ENCODE measurements at regions of chr13 and their contacts with region 1.

Region 1: GRCh38 chr13:29595380-29596063 is at the start of gene SLC7A1:
- DNase-seq: peak; percentile 88
- H3K4me3 Mint-ChIP-seq: peak within 1 kb of the TSS; percentile 95
- H3K27ac Mint-ChIP-seq: peak within 1 kb of the TSS; percentile 95
- H3K4me1 Mint-ChIP-seq: peaks cover 51% of the 10 kb centered on the region
- H3K27me3 Mint-ChIP-seq: peaks cover 6% of the 10 kb centered on the region
- total RNA-seq, gene SLC7A1: 128 and 138 TPM in 2 replicates

Region 2: DNA sequence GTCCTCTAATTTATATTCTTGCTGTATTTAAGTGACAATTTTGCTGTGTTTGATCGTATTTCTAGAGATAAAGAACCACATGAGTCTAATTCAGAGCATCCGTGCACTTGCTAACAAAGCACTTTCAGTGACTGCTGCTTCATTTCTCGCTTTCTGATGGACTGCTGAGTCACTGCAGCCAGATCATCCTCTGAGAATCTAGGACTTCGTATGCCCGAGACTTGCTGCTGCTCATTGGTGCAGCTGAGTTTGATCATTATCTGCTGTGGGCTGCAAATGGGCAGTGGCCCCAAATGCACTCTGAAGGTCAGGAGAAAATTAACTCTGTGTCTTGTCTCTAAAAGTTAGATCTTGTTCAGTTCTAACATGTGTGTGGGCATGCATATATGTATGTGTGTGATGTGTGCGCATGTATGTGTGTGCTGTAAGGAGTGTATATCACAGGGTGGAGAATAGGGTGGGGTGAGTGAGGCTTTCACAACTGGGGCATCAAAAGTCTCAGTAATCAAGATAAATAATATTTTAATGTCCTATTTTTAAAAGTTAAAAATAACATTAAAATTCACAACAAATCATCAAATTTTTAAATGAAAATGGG is 432.8 kb before region 1 on chr13:
- intact Hi-C with region 1: no loop called
- DNase-seq: no peak
- H3K4me3 Mint-ChIP-seq: no peak overlapping the region
- H3K27ac Mint-ChIP-seq: no peak overlapping the region
- H3K4me1 Mint-ChIP-seq: no peaks in the 10 kb centered on the region
- H3K27me3 Mint-ChIP-seq: no peaks in the 10 kb centered on the region

Region 3: DNA sequence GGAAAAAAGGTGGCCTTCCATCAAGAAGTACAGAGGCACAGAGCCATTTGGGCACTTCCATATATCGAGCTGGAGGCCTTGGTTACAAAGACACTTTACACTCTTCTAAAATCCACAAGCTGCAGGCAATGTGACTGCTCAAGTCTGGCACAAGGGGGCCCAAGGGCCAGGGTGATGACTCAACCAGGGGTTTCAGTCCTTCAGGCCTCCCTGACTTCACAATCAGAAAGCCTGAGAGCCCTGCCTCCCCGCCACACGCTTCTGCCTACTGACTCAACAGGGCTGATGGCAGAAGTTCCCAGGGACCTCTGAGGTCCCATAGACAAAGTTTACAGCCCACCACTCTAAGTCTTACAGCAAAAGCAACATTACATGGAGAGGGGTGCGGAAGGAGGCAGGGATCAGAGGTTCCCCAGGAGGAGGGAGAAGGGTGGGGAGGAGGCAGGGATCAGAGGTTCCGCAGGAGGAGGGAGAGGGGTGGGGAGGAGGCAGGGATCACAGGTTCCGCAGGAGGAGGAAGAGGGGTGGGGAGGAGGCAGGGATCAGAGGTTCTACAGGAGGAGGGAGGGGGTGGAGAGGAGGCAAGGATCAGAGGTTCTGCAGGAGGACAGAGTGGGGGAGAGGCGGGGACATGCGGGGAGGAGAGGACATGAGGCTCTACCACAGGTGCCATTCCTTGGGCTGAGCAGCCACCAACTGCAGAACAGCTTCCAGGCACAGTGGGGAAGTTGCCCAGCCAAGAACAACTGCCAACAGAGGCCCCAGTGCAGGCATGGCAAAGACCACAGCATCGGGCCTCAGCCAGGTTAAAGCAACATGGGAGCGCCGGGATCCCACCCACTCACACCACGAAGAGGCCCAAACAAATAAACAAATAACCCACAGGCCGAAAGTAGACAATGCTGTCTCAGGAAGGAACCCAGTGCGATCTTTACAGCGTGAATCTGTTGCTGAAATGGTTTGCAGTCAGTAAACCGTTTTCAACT is 52.0 kb before region 1 on chr13:
- intact Hi-C with region 1: loop called (anchors 5 kb)
- DNase-seq: peak; percentile 3
- H3K4me3 Mint-ChIP-seq: no peak overlapping the region
- H3K27ac Mint-ChIP-seq: peak overlapping the region; percentile 77
- H3K4me1 Mint-ChIP-seq: peaks cover 34% of the 10 kb centered on the region
- H3K27me3 Mint-ChIP-seq: peaks cover 2% of the 10 kb centered on the region

Region 4: DNA sequence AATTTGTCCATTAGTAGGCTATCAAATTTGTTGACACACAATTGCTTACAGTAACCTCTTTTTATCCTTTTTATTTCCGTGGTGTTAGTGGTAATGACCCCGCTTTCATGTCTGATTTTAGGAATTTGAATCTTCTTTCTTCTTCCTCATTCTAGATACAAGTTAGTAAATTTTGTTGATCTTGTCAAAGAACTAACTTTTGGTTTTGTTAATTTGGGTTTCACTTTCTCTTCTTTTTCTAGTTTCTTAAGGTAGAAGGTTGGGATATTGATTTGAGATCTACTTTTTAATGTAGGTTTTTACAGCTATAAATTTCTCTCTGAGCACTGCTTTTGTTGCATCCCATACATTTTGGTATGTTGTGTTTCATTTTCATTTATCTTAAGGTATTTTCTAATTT is 53.2 kb after region 1 on chr13:
- intact Hi-C with region 1: loop called (anchors 5 kb)
- DNase-seq: no peak
- H3K4me3 Mint-ChIP-seq: peak overlapping the region; percentile 70
- H3K27ac Mint-ChIP-seq: no peak overlapping the region
- H3K4me1 Mint-ChIP-seq: peaks cover 18% of the 10 kb centered on the region
- H3K27me3 Mint-ChIP-seq: no peaks in the 10 kb centered on the region

Region 5: DNA sequence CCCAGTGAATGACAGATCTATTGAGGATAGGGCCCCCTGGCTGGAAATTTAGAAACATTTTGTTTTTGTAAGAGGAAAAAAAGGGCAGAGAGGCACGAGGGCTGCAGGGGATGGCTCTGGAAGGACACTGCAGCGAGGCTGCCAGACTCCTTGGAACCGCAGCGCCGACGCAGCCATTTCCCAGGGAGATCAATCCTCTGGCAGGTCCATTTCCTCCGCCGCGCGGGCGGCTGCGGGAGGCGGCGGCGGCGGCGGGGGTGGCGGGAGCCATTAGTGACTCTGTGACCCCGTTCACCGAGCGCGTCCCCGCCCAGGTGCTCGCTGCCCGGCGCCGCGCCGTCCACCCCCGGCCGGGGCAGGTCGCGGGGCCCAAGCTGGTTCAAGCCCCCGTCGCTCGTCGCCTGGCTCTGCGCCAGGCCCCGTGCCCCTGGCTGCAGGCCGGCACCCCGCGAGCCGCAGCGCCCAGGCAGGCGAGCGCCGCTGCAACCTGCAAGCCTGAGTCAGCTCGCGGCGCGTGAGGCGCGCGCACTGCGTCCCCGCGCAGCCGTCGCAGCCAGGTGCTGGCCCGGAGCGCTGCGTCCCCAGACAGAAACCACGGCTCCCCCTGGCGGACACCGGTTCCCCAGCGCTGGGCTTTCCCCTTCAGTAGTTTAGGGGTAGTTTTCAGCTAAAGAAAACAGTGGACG is 519.2 kb after region 1 on chr13:
- intact Hi-C with region 1: loop called (anchors 2 kb)
- DNase-seq: peak; percentile 86
- H3K4me3 Mint-ChIP-seq: peak overlapping the region; percentile 81
- H3K27ac Mint-ChIP-seq: no peak overlapping the region
- H3K4me1 Mint-ChIP-seq: peaks cover 44% of the 10 kb centered on the region
- H3K27me3 Mint-ChIP-seq: peaks cover 18% of the 10 kb centered on the region

Region 6: DNA sequence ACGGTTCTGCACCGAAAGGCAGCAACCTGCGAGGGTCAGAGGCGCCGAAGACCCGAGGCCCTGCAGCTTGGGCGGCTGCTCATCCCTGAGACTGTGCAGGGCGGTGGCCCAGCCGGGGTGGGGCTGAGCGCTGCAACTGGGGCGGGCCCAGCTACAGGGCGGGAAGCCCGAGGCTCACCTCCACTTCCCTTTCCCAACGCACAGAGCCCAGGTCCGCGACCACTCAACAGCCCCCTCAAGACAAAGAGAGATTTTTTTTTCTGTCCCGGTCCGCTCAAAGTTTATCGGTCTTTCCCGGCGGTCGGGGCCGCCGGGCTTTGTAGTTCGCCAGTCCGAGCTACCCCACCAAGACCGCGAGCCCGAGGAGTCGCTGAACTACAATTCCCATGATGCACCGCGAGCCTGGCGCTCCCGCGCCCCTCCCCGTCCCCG is 711.3 kb after region 1 on chr13:
- intact Hi-C with region 1: loop called (anchors 5 kb)
- DNase-seq: peak; percentile 90
- H3K4me3 Mint-ChIP-seq: peak overlapping the region; percentile 88
- H3K27ac Mint-ChIP-seq: peak overlapping the region; percentile 84
- H3K4me1 Mint-ChIP-seq: peaks cover 65% of the 10 kb centered on the region
- H3K27me3 Mint-ChIP-seq: no peaks in the 10 kb centered on the region

Measured in activated T-helper 1 cell treated with anti-CD3 and anti-CD28 coated beads, Interleukin-12 subunit alpha, Interleukin-12 subunit beta, Interleukin-2, Interleukin-4 antibody, amounts not matched to agents 30 ng/mL and 10 ng/mL and 1 ng/mL, durations not matched to agents 14 hours and 24 hours and 36 hours (primary cell).